ENCODE measurements at regions of chr1 and their contacts with region 1.

Region 1: DNA sequence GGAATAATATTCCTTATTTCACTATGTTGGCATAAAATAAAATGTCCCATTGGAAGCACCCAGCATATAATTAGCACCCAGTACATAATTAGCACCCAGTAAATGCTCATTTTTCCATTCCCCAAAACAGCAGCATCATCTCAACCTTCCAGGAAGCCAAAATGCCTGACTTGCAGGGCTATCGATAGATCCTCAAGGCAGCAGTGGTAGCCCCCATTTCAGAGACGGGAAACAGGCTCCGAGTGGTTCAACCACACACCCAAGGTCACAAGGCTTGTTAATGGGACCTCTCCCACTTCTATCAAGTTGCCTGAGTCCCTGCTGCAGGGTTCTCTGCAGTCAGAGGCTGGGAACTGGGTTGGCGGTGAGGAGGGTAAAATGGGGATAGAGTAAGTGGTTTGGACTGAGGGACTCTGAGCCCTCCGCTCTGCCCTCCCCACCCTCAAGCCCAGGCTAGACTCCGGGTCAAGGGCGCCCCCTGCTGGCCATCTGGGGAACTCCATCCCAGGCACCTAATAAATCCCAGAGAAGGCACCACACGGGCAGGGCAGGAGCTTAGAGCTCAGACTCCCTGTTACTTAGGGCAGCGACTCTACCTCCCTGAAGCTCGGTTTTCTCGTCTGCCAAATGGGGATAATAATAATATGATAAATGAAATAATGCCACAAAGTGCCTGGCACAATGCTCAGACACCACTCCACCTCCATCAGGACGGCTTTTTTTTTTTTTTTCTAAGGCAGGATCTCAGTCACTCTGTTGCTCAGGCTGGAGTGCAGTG is 21.9 kb upstream of the LAPTM5 start:
- DNase-seq: peak; percentile 82 to 98 (median 88)
- ATAC-seq: peak; percentile 85
- H3K4me3 ChIP-seq: no peak overlapping the region
- H3K4me3 Mint-ChIP-seq: peak overlapping the region in 4 of 10 donors; percentile 4 to 64 (median 34)
- H3K27ac ChIP-seq: no peak overlapping the region
- H3K27ac Mint-ChIP-seq: peak overlapping the region in 5 of 9 donors; percentile 13 to 72 (median 54)
- H3K4me1 ChIP-seq: peaks cover 10 to 15% of the 10 kb centered on the region in 2 donors
- H3K4me1 Mint-ChIP-seq: peaks cover 0 to 19% (median 14%) of the 10 kb centered on the region in 7 donors
- H3K27me3 ChIP-seq: no peaks in the 10 kb centered on the region
- H3K27me3 Mint-ChIP-seq: peaks cover 0 to 12% (median 0%) of the 10 kb centered on the region in 5 donors

Region 2: GRCh38 chr1:30522031-30523004 is 257.2 kb before region 1 on chr1:
- CTCF ChIA-PET with region 1: no interaction called
- POLR2A ChIA-PET with region 1: no interaction called
- intact Hi-C with region 1: no loop called
- DNase-seq: no peak
- ATAC-seq: no peak
- H3K4me3 ChIP-seq: no peak overlapping the region
- H3K4me3 Mint-ChIP-seq: no peak overlapping the region
- H3K27ac ChIP-seq: no peak overlapping the region
- H3K27ac Mint-ChIP-seq: no peak overlapping the region
- H3K4me1 ChIP-seq: no peaks in the 10 kb centered on the region
- H3K4me1 Mint-ChIP-seq: peaks cover 0 to 1% (median 0%) of the 10 kb centered on the region in 7 donors
- H3K27me3 ChIP-seq: peaks cover 0 to 3% of the 10 kb centered on the region in 2 donors
- H3K27me3 Mint-ChIP-seq: peaks cover 2 to 35% (median 24%) of the 10 kb centered on the region in 5 donors

Region 3: DNA sequence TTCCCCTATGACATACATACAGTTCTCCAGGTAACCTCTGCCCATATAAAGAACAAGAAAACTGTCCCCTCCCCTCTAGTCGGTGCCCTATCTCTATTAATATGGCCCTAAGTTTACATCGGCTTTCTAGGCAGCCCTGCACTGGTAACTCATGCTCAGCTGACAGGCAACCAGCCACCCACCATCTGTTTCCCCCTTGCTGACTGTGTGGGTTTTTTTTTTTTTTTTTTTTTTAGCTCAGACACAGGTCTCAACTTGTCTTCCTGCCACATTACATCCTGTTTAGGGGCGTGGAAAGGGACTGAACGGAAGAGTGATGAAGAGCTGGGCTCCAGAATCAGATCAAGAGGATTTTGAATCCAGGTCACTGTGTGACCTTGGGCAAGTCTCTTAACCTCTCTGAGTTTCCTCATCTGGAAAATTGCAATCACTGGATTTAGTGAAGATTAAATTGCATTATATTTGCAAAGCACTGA is 35.9 kb before region 1 on chr1:
- CTCF ChIA-PET with region 1: interaction called, 99 read pairs
- POLR2A ChIA-PET with region 1: interaction called, 14 read pairs
- intact Hi-C with region 1: loop called (anchors 1 kb)
- DNase-seq: peak in 8 of 9 donors; percentile 58 to 90 (median 82)
- ATAC-seq: peak; percentile 83
- H3K4me3 ChIP-seq: peak overlapping the region; percentile 45
- H3K4me3 Mint-ChIP-seq: peak overlapping the region; percentile 82 to 98 (median 91)
- H3K27ac ChIP-seq: peak overlapping the region; percentile 98
- H3K27ac Mint-ChIP-seq: peak overlapping the region; percentile 90 to 100 (median 97)
- H3K4me1 ChIP-seq: peaks cover 84 to 86% of the 10 kb centered on the region in 2 donors
- H3K4me1 Mint-ChIP-seq: peaks cover 75 to 100% (median 97%) of the 10 kb centered on the region in 7 donors
- H3K27me3 ChIP-seq: no peaks in the 10 kb centered on the region
- H3K27me3 Mint-ChIP-seq: no peaks in the 10 kb centered on the region

Region 4: GRCh38 chr1:30768830-30769718 is 10.4 kb before region 1 on chr1:
- CTCF ChIA-PET with region 1: interaction called, 13 read pairs
- POLR2A ChIA-PET with region 1: no interaction called
- intact Hi-C with region 1: no loop called
- DNase-seq: no peak
- ATAC-seq: peak; percentile 84
- H3K4me3 ChIP-seq: no peak overlapping the region
- H3K4me3 Mint-ChIP-seq: no peak overlapping the region
- H3K27ac ChIP-seq: no peak overlapping the region
- H3K27ac Mint-ChIP-seq: peak overlapping the region in 5 of 9 donors; percentile 21 to 86 (median 25)
- H3K4me1 ChIP-seq: peaks cover 0 to 16% of the 10 kb centered on the region in 2 donors
- H3K4me1 Mint-ChIP-seq: peaks cover 7 to 32% (median 18%) of the 10 kb centered on the region in 7 donors
- H3K27me3 ChIP-seq: no peaks in the 10 kb centered on the region
- H3K27me3 Mint-ChIP-seq: peaks cover 0 to 2% (median 0%) of the 10 kb centered on the region in 5 donors

Region 5: DNA sequence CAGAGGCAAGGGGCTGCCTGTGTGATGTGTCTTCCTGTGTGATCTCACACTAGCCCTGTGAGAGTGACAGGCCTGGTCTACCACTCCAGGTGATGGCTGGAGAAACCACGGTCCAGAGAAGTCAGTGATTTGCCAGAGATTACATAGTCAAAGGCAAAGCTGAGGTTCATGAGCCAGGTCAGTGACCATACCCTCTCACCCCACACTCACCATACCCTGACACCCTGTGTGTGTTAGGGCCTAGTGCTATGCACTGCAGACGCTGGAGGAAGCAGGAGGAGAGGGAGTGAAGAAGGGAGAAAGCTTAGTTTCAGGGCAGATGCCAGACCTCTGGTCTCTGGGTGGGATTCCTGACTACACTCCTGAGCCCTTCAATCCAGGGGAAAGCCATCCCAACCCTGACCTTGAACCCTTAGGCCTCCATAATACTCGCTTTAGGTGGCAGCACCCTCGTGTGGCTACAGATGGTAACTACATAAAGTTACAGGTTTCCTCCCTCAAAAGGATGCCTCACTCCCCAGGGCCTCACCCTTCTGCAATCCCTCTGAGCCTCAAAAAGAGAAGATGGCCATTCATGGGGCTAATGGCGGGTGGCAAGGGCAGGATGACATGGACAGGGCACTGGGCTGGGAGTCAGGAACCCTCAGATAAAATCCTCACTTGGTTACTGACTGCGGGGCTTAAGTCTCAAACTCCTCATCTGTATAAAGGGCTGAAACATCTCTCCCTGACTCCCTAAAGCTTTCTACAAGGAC is 149.8 kb after region 1 on chr1:
- CTCF ChIA-PET with region 1: interaction called, 4 read pairs
- POLR2A ChIA-PET with region 1: no interaction called
- intact Hi-C with region 1: loop called in 1 of 2 experiments (anchors 1 kb)
- DNase-seq: peak in 7 of 9 donors; percentile 24 to 53 (median 41)
- ATAC-seq: peak; percentile 82
- H3K4me3 ChIP-seq: no peak overlapping the region
- H3K4me3 Mint-ChIP-seq: no peak overlapping the region
- H3K27ac ChIP-seq: no peak overlapping the region
- H3K27ac Mint-ChIP-seq: peak overlapping the region in 7 of 9 donors; percentile 20 to 71 (median 48)
- H3K4me1 ChIP-seq: peaks cover 0 to 11% of the 10 kb centered on the region in 2 donors
- H3K4me1 Mint-ChIP-seq: peaks cover 0 to 6% (median 0%) of the 10 kb centered on the region in 7 donors
- H3K27me3 ChIP-seq: no peaks in the 10 kb centered on the region
- H3K27me3 Mint-ChIP-seq: no peaks in the 10 kb centered on the region